ENCODE measurements at regions of chr14 and their contacts with region 1.

Region 1: DNA sequence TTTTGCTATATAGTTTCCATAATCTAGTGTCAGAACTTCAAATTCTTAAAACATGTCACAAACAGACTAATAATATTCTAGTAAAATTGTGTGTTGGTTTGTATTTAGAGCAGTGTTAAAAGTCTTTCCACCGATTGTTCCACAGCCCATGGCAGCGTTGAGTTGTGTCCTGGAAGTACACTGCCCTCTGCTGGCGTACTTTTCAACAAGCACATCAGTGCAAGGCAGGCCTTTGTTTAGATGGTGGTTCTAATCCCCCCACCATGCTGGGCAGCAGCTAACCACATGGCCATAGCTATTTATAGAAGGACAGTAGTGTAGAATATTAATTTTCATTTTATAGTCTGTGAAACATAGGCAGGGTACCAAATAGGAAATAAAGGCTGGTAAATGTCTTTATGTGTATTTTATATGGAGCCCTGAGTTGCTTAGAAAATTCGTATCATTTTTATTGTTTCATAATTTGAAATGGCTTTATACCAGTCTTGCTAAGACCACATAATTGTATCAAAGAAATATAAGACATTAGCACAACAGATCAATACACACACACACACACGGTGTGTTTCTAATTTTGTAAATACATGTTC is 235.4 kb downstream of the SEC23A start:
- DNase-seq: peak in 8 of 9 donors; percentile 10 to 51 (median 44)
- ATAC-seq: peak; percentile 76
- H3K4me3 ChIP-seq: no peak overlapping the region
- H3K4me3 Mint-ChIP-seq: no peak overlapping the region
- H3K27ac ChIP-seq: no peak overlapping the region
- H3K27ac Mint-ChIP-seq: no peak overlapping the region
- H3K4me1 ChIP-seq: no peaks in the 10 kb centered on the region
- H3K4me1 Mint-ChIP-seq: no peaks in the 10 kb centered on the region
- H3K27me3 ChIP-seq: no peaks in the 10 kb centered on the region
- H3K27me3 Mint-ChIP-seq: peaks cover 2 to 25% (median 10%) of the 10 kb centered on the region in 5 donors

Region 2: GRCh38 chr14:37709419-37710195 is 1158.0 kb before region 1 on chr14:
- CTCF ChIA-PET with region 1: no interaction called
- POLR2A ChIA-PET with region 1: no interaction called
- intact Hi-C with region 1: loop called in 1 of 2 experiments (anchors 5 kb)
- DNase-seq: no peak
- ATAC-seq: no peak
- H3K4me3 ChIP-seq: no peak overlapping the region
- H3K4me3 Mint-ChIP-seq: no peak overlapping the region
- H3K27ac ChIP-seq: no peak overlapping the region
- H3K27ac Mint-ChIP-seq: no peak overlapping the region
- H3K4me1 ChIP-seq: no peaks in the 10 kb centered on the region
- H3K4me1 Mint-ChIP-seq: no peaks in the 10 kb centered on the region
- H3K27me3 ChIP-seq: no peaks in the 10 kb centered on the region
- H3K27me3 Mint-ChIP-seq: peaks cover 0 to 9% (median 4%) of the 10 kb centered on the region in 5 donors

Region 3: DNA sequence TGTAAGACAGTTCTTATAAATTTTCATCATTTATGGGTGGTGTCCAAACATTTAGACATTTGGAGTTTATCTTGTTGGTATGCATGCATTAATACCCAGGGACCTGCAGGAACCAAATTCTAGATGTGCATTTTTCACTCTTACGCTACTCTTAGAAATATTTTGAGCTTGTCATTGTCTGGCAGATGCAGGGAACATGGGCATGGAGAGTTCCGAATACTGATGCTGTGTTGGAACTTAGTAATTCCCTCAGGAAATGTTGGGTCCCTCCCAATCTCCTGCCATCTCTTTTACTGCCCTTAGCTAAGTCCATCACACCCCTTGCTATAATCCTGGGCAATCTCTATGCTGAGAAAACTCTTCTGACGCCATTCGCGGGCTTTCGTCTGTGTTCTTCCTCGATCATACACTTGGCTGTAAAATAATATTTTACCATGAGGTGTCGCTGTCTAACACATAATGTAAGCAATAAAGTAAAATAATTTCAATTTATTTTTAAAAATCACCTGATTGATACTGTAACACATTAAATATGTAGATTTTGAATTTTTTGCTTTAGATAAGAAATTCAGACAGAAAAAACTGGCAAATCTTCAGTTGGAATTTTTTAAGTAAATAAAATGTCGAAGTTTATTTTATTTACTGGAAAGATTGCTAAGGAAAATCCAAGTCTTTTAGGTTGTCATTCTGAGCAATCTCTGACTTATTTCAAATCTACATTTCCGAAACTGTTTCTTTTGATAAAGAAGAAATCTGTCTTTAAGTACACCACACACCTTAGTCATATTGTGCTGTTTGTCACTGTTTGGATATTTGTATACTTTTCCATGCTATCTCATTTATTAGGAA is 964.1 kb before region 1 on chr14:
- CTCF ChIA-PET with region 1: interaction called, 51 read pairs
- POLR2A ChIA-PET with region 1: no interaction called
- intact Hi-C with region 1: loop called (anchors 1 kb)
- DNase-seq: peak in 7 of 9 donors; percentile 21 to 49 (median 41)
- ATAC-seq: no peak
- H3K4me3 ChIP-seq: no peak overlapping the region
- H3K4me3 Mint-ChIP-seq: no peak overlapping the region
- H3K27ac ChIP-seq: no peak overlapping the region
- H3K27ac Mint-ChIP-seq: no peak overlapping the region
- H3K4me1 ChIP-seq: no peaks in the 10 kb centered on the region
- H3K4me1 Mint-ChIP-seq: peaks cover 0 to 4% (median 2%) of the 10 kb centered on the region in 7 donors
- H3K27me3 ChIP-seq: peaks cover 0 to 4% of the 10 kb centered on the region in 2 donors
- H3K27me3 Mint-ChIP-seq: peaks cover 8 to 36% (median 12%) of the 10 kb centered on the region in 5 donors

Region 4: DNA sequence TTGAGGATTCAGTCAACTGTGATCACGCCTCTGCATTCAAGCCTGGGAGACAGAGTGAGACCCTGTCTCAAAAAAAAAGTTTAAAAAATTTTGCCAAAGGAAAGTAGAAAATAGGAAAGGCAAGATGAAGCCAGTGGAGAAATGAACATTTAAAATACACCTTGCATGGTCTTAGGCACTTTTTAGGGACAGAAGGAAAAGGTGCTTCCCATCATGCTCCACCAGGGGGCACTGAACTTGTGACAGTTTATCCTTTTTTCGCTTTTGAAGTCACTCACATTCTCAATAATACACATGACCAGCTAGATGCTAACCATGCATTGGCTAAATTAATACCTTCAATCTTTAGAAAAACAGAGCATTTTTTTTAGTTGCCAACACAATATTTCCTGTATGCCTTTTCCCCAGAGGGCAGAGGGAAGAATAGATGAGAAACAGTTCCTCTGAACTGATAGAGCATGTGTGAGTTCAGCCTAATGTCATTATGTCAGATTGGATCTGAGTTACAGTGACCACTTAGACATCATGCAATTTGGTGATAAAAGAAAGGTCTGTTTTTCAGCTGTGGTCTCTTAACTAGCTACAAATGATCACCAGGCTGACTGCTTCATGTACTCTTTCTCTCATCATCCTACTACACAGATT is 881.7 kb before region 1 on chr14:
- CTCF ChIA-PET with region 1: no interaction called
- POLR2A ChIA-PET with region 1: no interaction called
- intact Hi-C with region 1: loop called (anchors 2 to 5 kb)
- DNase-seq: peak; percentile 5 to 61 (median 54)
- ATAC-seq: peak; percentile 53
- H3K4me3 ChIP-seq: no peak overlapping the region
- H3K4me3 Mint-ChIP-seq: no peak overlapping the region
- H3K27ac ChIP-seq: no peak overlapping the region
- H3K27ac Mint-ChIP-seq: no peak overlapping the region
- H3K4me1 ChIP-seq: peaks cover 4 to 5% of the 10 kb centered on the region in 2 donors
- H3K4me1 Mint-ChIP-seq: peaks cover 0 to 20% (median 6%) of the 10 kb centered on the region in 7 donors
- H3K27me3 ChIP-seq: no peaks in the 10 kb centered on the region
- H3K27me3 Mint-ChIP-seq: no peaks in the 10 kb centered on the region

Region 5: GRCh38 chr14:38197001-38197783 is 670.5 kb before region 1 on chr14:
- CTCF ChIA-PET with region 1: no interaction called
- POLR2A ChIA-PET with region 1: no interaction called
- intact Hi-C with region 1: loop called in 1 of 2 experiments (anchors 2 kb)
- DNase-seq: peak in 5 of 9 donors; percentile 23 to 49 (median 35)
- ATAC-seq: no peak
- H3K4me3 ChIP-seq: no peak overlapping the region
- H3K4me3 Mint-ChIP-seq: no peak overlapping the region
- H3K27ac ChIP-seq: no peak overlapping the region
- H3K27ac Mint-ChIP-seq: peak overlapping the region in 1 of 9 donors; percentile 60
- H3K4me1 ChIP-seq: peaks cover 0 to 4% of the 10 kb centered on the region in 2 donors
- H3K4me1 Mint-ChIP-seq: peaks cover 0 to 8% (median 5%) of the 10 kb centered on the region in 7 donors
- H3K27me3 ChIP-seq: no peaks in the 10 kb centered on the region
- H3K27me3 Mint-ChIP-seq: peaks cover 0 to 2% (median 0%) of the 10 kb centered on the region in 5 donors

Region 6: DNA sequence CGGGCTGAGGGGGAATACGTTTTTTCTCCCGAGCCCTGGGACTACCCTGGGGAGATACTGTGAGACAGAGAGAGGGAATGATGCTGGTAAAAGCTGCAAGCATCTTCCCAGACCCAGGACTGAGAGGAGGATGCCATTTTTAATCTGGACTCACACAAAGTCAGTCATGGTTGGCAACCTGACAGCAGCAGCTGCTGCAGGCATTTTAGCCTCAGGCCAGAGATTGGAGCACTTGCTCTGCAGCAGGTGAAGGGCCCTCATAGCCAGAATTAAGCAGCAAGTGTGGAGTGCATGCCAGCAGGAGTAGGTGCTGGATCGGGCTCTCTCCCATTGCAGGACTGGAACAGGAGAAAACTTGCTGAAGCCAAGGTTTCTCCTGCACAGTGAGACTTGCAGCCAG is 250.7 kb before region 1 on chr14:
- CTCF ChIA-PET with region 1: no interaction called
- POLR2A ChIA-PET with region 1: no interaction called
- intact Hi-C with region 1: no loop called
- DNase-seq: no peak
- ATAC-seq: no peak
- H3K4me3 ChIP-seq: no peak overlapping the region
- H3K4me3 Mint-ChIP-seq: no peak overlapping the region
- H3K27ac ChIP-seq: no peak overlapping the region
- H3K27ac Mint-ChIP-seq: no peak overlapping the region
- H3K4me1 ChIP-seq: no peaks in the 10 kb centered on the region
- H3K4me1 Mint-ChIP-seq: no peaks in the 10 kb centered on the region
- H3K27me3 ChIP-seq: no peaks in the 10 kb centered on the region
- H3K27me3 Mint-ChIP-seq: peaks cover 0 to 6% (median 0%) of the 10 kb centered on the region in 5 donors

Region 7: DNA sequence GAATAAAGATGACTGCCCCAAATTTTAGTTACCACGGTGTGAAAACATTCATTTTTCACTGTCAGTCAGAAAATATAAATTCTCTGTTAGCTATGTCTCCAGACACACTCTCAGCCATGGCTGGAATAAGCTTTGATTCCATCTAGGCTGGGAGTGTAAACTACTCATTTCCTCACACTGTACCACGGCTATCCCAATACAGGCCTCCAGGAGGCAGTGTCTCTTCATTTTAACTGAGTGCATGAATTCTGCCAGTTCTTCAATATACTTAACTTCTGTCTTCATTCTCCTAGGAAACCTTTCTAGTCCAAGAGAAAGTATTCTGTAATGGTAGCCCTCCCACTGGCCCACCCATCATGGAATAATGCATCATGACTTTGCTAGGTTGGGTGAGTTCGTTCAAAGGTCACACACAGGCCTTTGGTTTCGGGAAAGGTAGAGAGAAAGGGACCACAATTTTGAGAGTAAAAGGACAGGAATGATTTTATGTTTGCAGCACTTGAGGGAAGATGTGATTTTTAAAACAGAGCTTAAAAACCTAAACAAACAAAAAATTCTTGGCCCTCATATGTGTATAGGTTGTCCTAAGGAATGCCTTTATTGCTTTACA is 145.7 kb before region 1 on chr14:
- CTCF ChIA-PET with region 1: no interaction called
- POLR2A ChIA-PET with region 1: no interaction called
- intact Hi-C with region 1: loop called in 1 of 2 experiments (anchors 1 kb)
- DNase-seq: peak in 1 of 9 donors; percentile 2
- ATAC-seq: peak; percentile 70
- H3K4me3 ChIP-seq: no peak overlapping the region
- H3K4me3 Mint-ChIP-seq: no peak overlapping the region
- H3K27ac ChIP-seq: no peak overlapping the region
- H3K27ac Mint-ChIP-seq: no peak overlapping the region
- H3K4me1 ChIP-seq: no peaks in the 10 kb centered on the region
- H3K4me1 Mint-ChIP-seq: no peaks in the 10 kb centered on the region
- H3K27me3 ChIP-seq: no peaks in the 10 kb centered on the region
- H3K27me3 Mint-ChIP-seq: no peaks in the 10 kb centered on the region

Region 8: GRCh38 chr14:39015360-39015961 is 147.8 kb after region 1 on chr14:
- CTCF ChIA-PET with region 1: no interaction called
- POLR2A ChIA-PET with region 1: no interaction called
- intact Hi-C with region 1: loop called in 1 of 2 experiments (anchors 10 kb)
- DNase-seq: peak in 5 of 9 donors; percentile 3 to 15 (median 13)
- ATAC-seq: peak; percentile 45
- H3K4me3 ChIP-seq: no peak overlapping the region
- H3K4me3 Mint-ChIP-seq: no peak overlapping the region
- H3K27ac ChIP-seq: no peak overlapping the region
- H3K27ac Mint-ChIP-seq: no peak overlapping the region
- H3K4me1 ChIP-seq: no peaks in the 10 kb centered on the region
- H3K4me1 Mint-ChIP-seq: peaks cover 0 to 3% (median 0%) of the 10 kb centered on the region in 7 donors
- H3K27me3 ChIP-seq: no peaks in the 10 kb centered on the region
- H3K27me3 Mint-ChIP-seq: no peaks in the 10 kb centered on the region